ENCODE measurements at regions of chr12 and their contacts with region 1.

Region 1: DNA sequence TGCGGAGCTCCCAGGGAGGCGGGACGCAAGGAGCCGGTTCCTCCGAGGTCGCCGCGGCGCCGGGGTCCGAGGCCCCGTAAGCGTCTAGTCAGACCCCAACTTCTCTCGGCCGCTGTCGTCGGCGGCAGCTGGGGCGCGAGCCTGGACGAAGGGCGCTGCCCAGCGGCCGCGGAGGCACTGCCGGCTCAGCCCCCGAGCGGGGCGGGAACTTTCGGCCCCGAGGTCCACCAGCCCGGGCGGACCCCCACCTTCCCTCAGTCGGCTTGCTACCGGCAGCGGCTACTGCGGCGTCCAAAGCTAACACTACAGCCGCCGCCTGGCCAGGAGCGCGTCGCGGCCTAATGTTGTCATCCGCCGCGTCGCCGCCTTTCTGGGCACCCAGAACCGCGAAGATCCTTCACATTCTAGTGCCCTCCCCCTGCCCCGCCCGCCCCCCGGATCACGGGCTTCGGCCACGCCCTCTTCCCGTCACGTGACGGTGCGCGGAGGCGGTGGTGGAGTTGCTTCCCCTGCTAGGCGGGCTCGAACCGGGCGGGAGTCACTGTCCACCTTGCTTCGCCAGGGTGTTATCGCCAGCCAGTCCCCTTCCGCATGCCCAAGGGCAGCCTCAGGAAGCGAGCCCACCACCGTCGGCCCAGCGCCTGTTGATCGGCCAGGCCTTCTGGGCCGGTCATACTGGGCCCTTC is at the start of gene OSBPL8:
- DNase-seq: peak; percentile 85
- ATAC-seq: peak; percentile 92
- H3K4me3 ChIP-seq: peak within 1 kb of the TSS; percentile 91
- H3K27ac ChIP-seq: peak within 1 kb of the TSS; percentile 89
- H3K4me1 ChIP-seq: no peaks in the 10 kb centered on the region
- H3K27me3 ChIP-seq: no peaks in the 10 kb centered on the region
- CTCF ChIP-seq: peak; percentile 29
- POLR2A ChIP-seq: peak; percentile 82
- RAD21 ChIP-seq: peak; percentile 36; the same call in 1 of the 2 replicates
- total RNA-seq, gene OSBPL8: 24.2 and 48.0 TPM in 2 replicates

Region 2: DNA sequence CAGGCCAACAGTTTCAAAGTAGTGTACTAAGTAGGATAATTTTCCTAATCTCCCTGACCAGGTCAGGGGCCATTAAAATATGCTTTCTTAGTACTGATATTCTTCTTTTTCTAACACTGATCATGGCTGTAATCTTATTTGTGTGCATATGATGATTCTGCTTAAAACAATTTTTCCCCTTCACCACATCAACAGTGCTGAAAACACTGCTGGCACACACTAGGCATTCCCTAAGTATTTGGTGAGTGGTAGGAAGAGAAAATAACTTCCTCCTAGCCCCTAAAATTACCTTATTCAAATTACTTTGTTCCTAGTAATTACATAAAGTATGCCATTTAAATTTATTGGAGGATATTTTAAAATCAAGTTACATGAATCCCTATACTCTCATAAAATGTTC is 161.4 kb before region 1 on chr12:
- CTCF ChIA-PET with region 1: no interaction called
- POLR2A ChIA-PET with region 1: no interaction called
- dilution Hi-C with region 1: no loop called
- in situ Hi-C with region 1: no loop called
- intact Hi-C with region 1: loop called (anchors 10 kb)
- DNase-seq: no peak
- ATAC-seq: no peak
- H3K4me3 ChIP-seq: no peak overlapping the region
- H3K27ac ChIP-seq: no peak overlapping the region
- H3K4me1 ChIP-seq: no peaks in the 10 kb centered on the region; the same call in 1 of the 2 replicates
- H3K27me3 ChIP-seq: no peaks in the 10 kb centered on the region
- CTCF ChIP-seq: no peak
- POLR2A ChIP-seq: no peak
- RAD21 ChIP-seq: no peak

Region 3: GRCh38 chr12:76470028-76470939 is 89.3 kb before region 1 on chr12:
- CTCF ChIA-PET with region 1: no interaction called
- POLR2A ChIA-PET with region 1: interaction called, 3 read pairs
- dilution Hi-C with region 1: no loop called
- in situ Hi-C with region 1: no loop called
- intact Hi-C with region 1: loop called (anchors 5 kb)
- DNase-seq: peak; percentile 93
- ATAC-seq: peak; percentile 99
- H3K4me3 ChIP-seq: no peak overlapping the region
- H3K27ac ChIP-seq: no peak overlapping the region
- H3K4me1 ChIP-seq: peaks cover 3% of the 10 kb centered on the region; the same call in 1 of the 2 replicates
- H3K27me3 ChIP-seq: no peaks in the 10 kb centered on the region
- CTCF ChIP-seq: no peak
- POLR2A ChIP-seq: no peak
- RAD21 ChIP-seq: no peak

Measured in IMR-90 (cell line).